ENCODE measurements at regions of chr20 and their contacts with region 1.

Region 1: DNA sequence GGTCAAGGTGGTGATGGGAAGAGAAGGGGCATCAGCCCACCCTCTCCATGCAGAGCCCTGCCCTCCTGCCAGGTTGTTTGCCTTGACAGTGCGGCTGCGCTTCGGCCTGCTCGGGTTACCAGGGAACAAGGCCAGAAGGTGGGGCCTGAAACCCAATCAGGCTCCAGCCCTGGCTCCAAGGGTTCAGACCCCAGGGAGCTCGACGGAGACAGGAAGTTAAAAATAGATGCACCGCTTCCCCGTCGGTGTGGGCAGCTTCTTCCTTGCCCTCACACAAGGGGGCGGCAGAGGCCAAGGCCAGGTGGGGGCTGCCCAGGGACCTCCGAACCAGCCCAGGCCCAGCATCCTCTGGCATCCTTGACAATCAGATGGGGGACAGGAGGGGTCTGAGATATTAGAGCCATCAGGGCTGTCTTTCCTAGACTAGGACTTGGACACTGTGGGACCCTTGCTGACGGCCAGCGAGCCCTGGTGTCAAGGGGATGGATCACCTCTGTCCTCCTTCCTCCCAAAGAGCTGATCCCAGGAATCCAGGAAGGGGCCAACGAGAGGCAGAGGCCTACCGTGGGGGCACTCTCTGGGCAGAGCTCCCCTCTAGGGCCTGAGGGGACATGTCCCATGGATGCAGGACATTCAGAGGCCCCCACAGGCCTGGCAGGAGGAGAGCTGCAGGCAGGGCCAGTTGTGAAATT is 65.2 kb downstream of the RIPOR3 start:
- DNase-seq: peak; percentile 91
- ATAC-seq: peak; percentile 95
- H3K4me3 Mint-ChIP-seq: no peak overlapping the region
- H3K27ac Mint-ChIP-seq: peak overlapping the region; percentile 53; the same call in 1 of the 2 replicates
- H3K4me1 Mint-ChIP-seq: peaks cover 18% of the 10 kb centered on the region
- H3K27me3 Mint-ChIP-seq: no peaks in the 10 kb centered on the region
- CTCF ChIP-seq: peak; percentile 67

Region 2: DNA sequence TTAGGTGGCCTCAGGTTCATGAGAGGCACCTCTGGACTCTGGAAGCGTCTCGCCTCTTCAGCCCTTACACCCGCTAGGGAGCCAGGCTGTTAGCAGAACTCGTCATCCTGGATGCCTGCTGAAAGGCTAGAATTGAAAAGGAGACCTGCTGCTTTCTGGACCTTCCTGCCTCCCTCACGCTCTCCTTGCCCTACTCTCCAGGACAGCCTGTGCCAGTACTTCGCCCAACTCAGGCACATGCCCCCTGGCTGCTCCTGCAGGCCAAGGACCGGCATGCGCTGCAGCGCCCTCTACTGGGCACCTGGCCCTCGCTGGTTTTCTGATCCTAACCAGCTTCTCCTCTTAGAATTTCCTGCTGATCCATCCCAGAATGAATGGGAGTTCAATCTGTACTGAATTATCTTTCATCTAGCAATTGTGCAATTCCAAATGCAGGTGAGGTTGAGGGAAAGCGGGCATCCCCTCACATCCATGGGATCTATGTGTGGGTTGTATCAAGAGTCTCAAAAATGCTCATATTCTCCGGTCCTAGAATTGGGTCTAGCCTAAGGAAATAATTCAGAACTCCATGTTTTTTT is 38.0 kb before region 1 on chr20:
- CTCF ChIA-PET with region 1: interaction called, 16 read pairs
- POLR2A ChIA-PET with region 1: no interaction called
- DNase-seq: peak; percentile 93
- ATAC-seq: peak; percentile 89
- H3K4me3 Mint-ChIP-seq: no peak overlapping the region
- H3K27ac Mint-ChIP-seq: no peak overlapping the region
- H3K4me1 Mint-ChIP-seq: no peaks in the 10 kb centered on the region
- H3K27me3 Mint-ChIP-seq: no peaks in the 10 kb centered on the region
- CTCF ChIP-seq: peak; percentile 88

Region 3: DNA sequence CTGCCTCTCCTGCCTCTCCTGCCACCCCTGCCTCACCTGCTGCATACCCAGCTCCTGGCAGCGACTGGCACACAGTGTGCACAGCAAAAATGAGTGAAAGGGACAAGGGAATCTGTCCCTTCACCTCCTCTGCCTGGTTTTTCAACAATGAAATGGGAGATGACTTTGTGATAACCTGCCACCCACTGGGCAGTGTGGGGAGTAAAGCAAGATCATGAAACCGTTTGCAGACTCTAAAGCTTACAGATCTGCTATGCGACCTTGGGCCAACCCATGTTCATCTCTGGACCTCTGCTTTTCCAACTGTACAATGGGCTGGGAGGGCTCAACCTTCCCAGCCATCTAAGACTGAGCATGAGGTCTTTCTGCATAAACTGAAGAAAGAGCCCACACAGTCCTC is 15.9 kb before region 1 on chr20:
- CTCF ChIA-PET with region 1: interaction called, 13 read pairs
- POLR2A ChIA-PET with region 1: no interaction called
- DNase-seq: no peak
- ATAC-seq: no peak
- H3K4me3 Mint-ChIP-seq: no peak overlapping the region
- H3K27ac Mint-ChIP-seq: no peak overlapping the region; the same call in 1 of the 2 replicates
- H3K4me1 Mint-ChIP-seq: peaks cover 7% of the 10 kb centered on the region
- H3K27me3 Mint-ChIP-seq: no peaks in the 10 kb centered on the region
- CTCF ChIP-seq: no peak

Region 4: DNA sequence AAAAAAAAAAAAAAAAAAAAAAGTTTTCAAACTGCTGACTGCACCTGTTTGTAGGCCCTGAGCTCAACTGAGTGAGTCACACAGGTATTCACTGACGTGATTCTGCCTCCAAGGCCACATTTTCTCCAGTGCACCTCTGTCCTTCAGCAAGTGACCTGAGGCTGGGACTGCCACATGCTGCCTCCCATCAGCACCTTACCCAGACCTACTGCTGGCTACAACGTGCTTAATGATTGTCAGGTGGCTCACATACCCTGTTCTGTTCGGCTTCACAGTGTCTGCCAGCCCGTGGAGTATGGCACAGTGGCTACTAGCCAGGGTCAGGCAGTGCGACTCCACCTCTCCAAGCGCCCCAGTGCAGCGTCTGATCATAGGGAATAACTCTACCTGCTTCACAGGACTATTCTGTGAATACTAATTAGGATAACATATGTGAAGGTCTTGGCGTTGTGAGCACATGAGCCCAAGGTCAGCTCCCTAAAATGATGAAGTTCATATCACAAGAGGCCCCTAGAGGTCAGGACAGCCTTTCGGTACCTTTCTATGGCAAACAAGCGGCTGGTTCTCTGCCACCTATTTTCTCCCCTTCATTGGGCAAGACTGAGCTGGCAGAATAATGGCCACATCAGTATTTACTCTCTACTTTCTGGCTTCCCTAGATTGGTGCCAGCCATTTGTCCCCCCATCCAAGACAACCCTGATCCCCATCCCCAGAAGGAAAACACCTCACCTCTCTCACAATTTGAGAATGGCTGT is 37.1 kb after region 1 on chr20:
- CTCF ChIA-PET with region 1: interaction called, 21 read pairs
- POLR2A ChIA-PET with region 1: no interaction called
- DNase-seq: no peak
- ATAC-seq: peak; percentile 68
- H3K4me3 Mint-ChIP-seq: no peak overlapping the region
- H3K27ac Mint-ChIP-seq: peak overlapping the region; percentile 38; the same call in 1 of the 2 replicates
- H3K4me1 Mint-ChIP-seq: peaks cover 34% of the 10 kb centered on the region
- H3K27me3 Mint-ChIP-seq: no peaks in the 10 kb centered on the region
- CTCF ChIP-seq: no peak

Region 5: GRCh38 chr20:50690634-50691572 is 64.8 kb after region 1 on chr20 and contains the start of gene RIPOR3:
- CTCF ChIA-PET with region 1: interaction called, 28 read pairs
- POLR2A ChIA-PET with region 1: no interaction called
- DNase-seq: peak; percentile 49
- ATAC-seq: peak; percentile 46
- H3K4me3 Mint-ChIP-seq: peak within 1 kb of the TSS; percentile 78
- H3K27ac Mint-ChIP-seq: peak within 1 kb of the TSS; percentile 94
- H3K4me1 Mint-ChIP-seq: peaks cover 53% of the 10 kb centered on the region
- H3K27me3 Mint-ChIP-seq: no peaks in the 10 kb centered on the region
- CTCF ChIP-seq: no peak
- total RNA-seq, gene RIPOR3: 5.4 to 6.5 TPM (median 6.0 TPM) in 3 replicates

Region 6: GRCh38 chr20:50724851-50725721 is 99.0 kb after region 1 on chr20:
- CTCF ChIA-PET with region 1: interaction called, 26 read pairs
- POLR2A ChIA-PET with region 1: no interaction called
- DNase-seq: peak; percentile 25
- ATAC-seq: peak; percentile 85
- H3K4me3 Mint-ChIP-seq: no peak overlapping the region
- H3K27ac Mint-ChIP-seq: no peak overlapping the region
- H3K4me1 Mint-ChIP-seq: peaks cover 12% of the 10 kb centered on the region
- H3K27me3 Mint-ChIP-seq: no peaks in the 10 kb centered on the region
- CTCF ChIP-seq: no peak

Region 7: GRCh38 chr20:50744143-50744792 is 118.1 kb after region 1 on chr20:
- CTCF ChIA-PET with region 1: interaction called, 76 read pairs
- POLR2A ChIA-PET with region 1: no interaction called
- DNase-seq: no peak
- ATAC-seq: peak; percentile 69
- H3K4me3 Mint-ChIP-seq: no peak overlapping the region
- H3K27ac Mint-ChIP-seq: peak overlapping the region; percentile 97
- H3K4me1 Mint-ChIP-seq: peaks cover 61% of the 10 kb centered on the region
- H3K27me3 Mint-ChIP-seq: no peaks in the 10 kb centered on the region
- CTCF ChIP-seq: no peak

Measured in WTC11 (cell line).